WTC11 (cell line): ENCODE measurements at regions of chr6 and their contacts with region 1.

Region 1: DNA sequence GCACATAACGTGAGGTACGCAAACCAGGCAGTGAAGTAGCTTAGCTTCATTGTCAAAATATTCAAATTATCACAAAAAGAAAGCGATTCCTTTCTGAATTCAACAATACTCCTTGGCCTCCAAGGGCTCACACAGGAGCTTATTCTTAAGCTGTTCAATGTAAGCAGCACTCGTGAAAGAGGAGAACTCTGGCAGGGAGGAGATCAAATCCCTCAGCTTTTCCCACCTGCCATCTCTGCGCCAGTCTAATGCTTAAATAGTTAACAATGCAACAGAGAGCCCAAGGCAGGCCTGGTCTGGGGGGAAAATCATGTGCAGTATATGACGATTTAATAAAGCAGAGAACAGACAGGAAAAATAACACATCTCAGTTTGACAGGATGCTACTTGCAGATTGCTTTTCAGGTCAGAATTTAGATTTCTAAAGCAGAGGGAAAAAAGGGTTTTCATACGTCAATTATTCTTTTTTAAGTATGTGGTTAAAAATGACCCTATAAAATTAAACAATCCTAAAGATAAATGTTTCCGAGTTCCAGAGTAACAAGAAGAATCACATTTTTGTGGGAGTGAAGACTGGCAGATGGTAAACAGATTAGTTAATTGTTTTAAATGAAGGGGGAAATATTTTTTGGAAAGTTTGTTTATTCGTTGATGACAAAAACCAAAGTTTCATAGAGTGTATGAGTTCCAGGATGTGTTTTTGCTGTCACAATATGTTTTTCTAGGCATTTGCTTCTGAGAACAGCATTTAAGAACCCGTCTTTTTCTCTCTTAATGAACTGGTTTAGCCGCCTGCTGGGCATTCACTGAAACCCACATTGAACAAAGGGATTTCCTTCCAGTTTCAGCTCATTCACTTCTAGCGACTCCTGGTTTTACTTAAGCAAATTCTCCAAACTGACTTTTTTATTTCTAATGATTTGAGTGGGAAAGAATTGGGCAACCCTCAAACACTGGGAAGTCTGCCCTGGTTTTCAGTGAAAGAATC is 45.9 kb downstream of the PLAGL1 start:
- DNase-seq: no peak
- ATAC-seq: no peak
- H3K4me3 Mint-ChIP-seq: peak overlapping the region; percentile 14
- H3K27ac Mint-ChIP-seq: no peak overlapping the region
- H3K4me1 Mint-ChIP-seq: peaks cover 88% of the 10 kb centered on the region
- H3K27me3 Mint-ChIP-seq: no peaks in the 10 kb centered on the region
- CTCF ChIP-seq: no peak

Region 2: GRCh38 chr6:143536865-143537691 is 425.1 kb before region 1 on chr6:
- CTCF ChIA-PET with region 1: no interaction called
- POLR2A ChIA-PET with region 1: no interaction called
- DNase-seq: peak; percentile 74
- ATAC-seq: peak; percentile 81
- H3K4me3 Mint-ChIP-seq: peak overlapping the region; percentile 70
- H3K27ac Mint-ChIP-seq: no peak overlapping the region
- H3K4me1 Mint-ChIP-seq: peaks cover 30% of the 10 kb centered on the region
- H3K27me3 Mint-ChIP-seq: peaks cover 44% of the 10 kb centered on the region
- CTCF ChIP-seq: no peak

Region 3: GRCh38 chr6:143973097-143973966 is 11.2 kb after region 1 on chr6:
- CTCF ChIA-PET with region 1: interaction called, 25 read pairs
- POLR2A ChIA-PET with region 1: interaction called, 8 read pairs
- DNase-seq: peak; percentile 60
- ATAC-seq: peak; percentile 91
- H3K4me3 Mint-ChIP-seq: peak overlapping the region; percentile 46
- H3K27ac Mint-ChIP-seq: peak overlapping the region; percentile 24
- H3K4me1 Mint-ChIP-seq: peaks cover 60% of the 10 kb centered on the region
- H3K27me3 Mint-ChIP-seq: peaks cover 58% of the 10 kb centered on the region; the same call in 1 of the 2 replicates
- CTCF ChIP-seq: no peak

Region 4: DNA sequence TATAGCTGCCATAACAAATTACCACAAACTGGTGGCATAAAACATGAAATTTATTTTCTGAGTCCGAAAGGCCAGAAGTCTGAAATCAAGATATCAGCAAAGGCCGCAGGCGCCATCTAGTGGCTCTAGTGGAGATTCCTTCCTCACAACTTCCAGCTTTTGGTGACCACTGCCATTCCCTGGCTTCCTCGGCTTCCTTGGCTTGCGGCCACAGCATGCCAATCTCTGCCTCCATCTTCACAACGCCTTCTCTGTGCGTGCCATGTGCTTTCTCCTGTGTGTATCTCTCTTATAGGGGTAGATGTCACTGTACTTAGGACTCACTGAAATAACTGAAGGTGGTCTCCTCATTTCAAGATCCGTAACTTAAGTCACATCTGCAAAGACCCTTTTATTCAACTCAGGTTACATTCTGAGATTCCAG is 51.3 kb after region 1 on chr6:
- CTCF ChIA-PET with region 1: interaction called, 14 read pairs
- POLR2A ChIA-PET with region 1: no interaction called
- DNase-seq: peak; percentile 79
- ATAC-seq: peak; percentile 63
- H3K4me3 Mint-ChIP-seq: no peak overlapping the region
- H3K27ac Mint-ChIP-seq: no peak overlapping the region
- H3K4me1 Mint-ChIP-seq: no peaks in the 10 kb centered on the region
- H3K27me3 Mint-ChIP-seq: peaks cover 50% of the 10 kb centered on the region
- CTCF ChIP-seq: peak; percentile 81